ENCODE measurements at regions of chr21 and their contacts with region 1.

Region 1: GRCh38 chr21:41612674-41613532 is 104.9 kb upstream of the TMPRSS2 start:
- DNase-seq: peak; percentile 93
- ATAC-seq: peak; percentile 70
- H3K4me3 ChIP-seq: peak overlapping the region; percentile 34; the same call in 1 of the 2 replicates
- H3K27ac ChIP-seq: peak overlapping the region; percentile 86
- H3K4me1 ChIP-seq: peaks cover 52% of the 10 kb centered on the region
- H3K27me3 ChIP-seq: no peaks in the 10 kb centered on the region
- CTCF ChIP-seq: peak; percentile 67

Region 2: DNA sequence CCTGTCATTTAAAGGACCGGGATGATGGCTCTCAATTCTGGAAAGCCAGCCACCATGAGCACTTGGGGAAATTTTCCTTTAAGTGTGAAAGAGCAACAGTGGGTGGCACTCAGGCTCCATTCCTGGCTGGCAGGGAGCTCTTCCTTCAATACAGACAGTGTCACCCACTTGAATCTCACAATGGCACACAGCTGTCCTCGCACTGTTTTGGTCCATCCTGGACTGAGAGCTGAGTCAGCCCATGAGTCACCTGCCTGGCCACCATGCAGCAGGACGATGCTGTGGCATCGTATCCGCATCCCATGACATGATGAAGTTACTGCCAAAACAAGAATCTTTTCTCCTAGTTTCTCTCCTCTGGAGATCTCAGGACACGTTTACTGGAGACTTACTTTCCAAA is 111.0 kb before region 1 on chr21:
- CTCF ChIA-PET with region 1: interaction called, 5 read pairs
- POLR2A ChIA-PET with region 1: no interaction called
- intact Hi-C with region 1: loop called (anchors 5 kb)
- DNase-seq: peak; percentile 80
- ATAC-seq: peak; percentile 87
- H3K4me3 ChIP-seq: no peak overlapping the region
- H3K27ac ChIP-seq: peak overlapping the region; percentile 47
- H3K4me1 ChIP-seq: peaks cover 40% of the 10 kb centered on the region
- H3K27me3 ChIP-seq: no peaks in the 10 kb centered on the region
- CTCF ChIP-seq: peak; percentile 31; the same call in 1 of the 2 replicates

Region 3: GRCh38 chr21:41673581-41674335 is 60.9 kb after region 1 on chr21:
- CTCF ChIA-PET with region 1: interaction called, 12 read pairs
- POLR2A ChIA-PET with region 1: interaction called, 5 read pairs
- intact Hi-C with region 1: loop called (anchors 2 kb)
- DNase-seq: no peak
- ATAC-seq: no peak
- H3K4me3 ChIP-seq: no peak overlapping the region
- H3K27ac ChIP-seq: no peak overlapping the region
- H3K4me1 ChIP-seq: peaks cover 22% of the 10 kb centered on the region
- H3K27me3 ChIP-seq: no peaks in the 10 kb centered on the region
- CTCF ChIP-seq: no peak

Region 4: GRCh38 chr21:41761211-41762181 is 148.6 kb after region 1 on chr21:
- CTCF ChIA-PET with region 1: interaction called, 19 read pairs
- POLR2A ChIA-PET with region 1: interaction called, 7 read pairs
- intact Hi-C with region 1: loop called (anchors 1 kb)
- DNase-seq: peak; percentile 98
- ATAC-seq: peak; percentile 65
- H3K4me3 ChIP-seq: peak overlapping the region; percentile 94
- H3K27ac ChIP-seq: peak overlapping the region; percentile 97
- H3K4me1 ChIP-seq: peaks cover 66% of the 10 kb centered on the region
- H3K27me3 ChIP-seq: no peaks in the 10 kb centered on the region
- CTCF ChIP-seq: no peak

Region 5: GRCh38 chr21:41783441-41784161 is 170.7 kb after region 1 on chr21:
- CTCF ChIA-PET with region 1: interaction called, 47 read pairs
- POLR2A ChIA-PET with region 1: interaction called, 4 read pairs
- intact Hi-C with region 1: loop called (anchors 1 kb)
- DNase-seq: peak; percentile 100
- ATAC-seq: peak; percentile 66
- H3K4me3 ChIP-seq: peak overlapping the region; percentile 8; the same call in 1 of the 2 replicates
- H3K27ac ChIP-seq: peak overlapping the region; percentile 97
- H3K4me1 ChIP-seq: peaks cover 89% of the 10 kb centered on the region
- H3K27me3 ChIP-seq: no peaks in the 10 kb centered on the region
- CTCF ChIP-seq: no peak

Region 6: DNA sequence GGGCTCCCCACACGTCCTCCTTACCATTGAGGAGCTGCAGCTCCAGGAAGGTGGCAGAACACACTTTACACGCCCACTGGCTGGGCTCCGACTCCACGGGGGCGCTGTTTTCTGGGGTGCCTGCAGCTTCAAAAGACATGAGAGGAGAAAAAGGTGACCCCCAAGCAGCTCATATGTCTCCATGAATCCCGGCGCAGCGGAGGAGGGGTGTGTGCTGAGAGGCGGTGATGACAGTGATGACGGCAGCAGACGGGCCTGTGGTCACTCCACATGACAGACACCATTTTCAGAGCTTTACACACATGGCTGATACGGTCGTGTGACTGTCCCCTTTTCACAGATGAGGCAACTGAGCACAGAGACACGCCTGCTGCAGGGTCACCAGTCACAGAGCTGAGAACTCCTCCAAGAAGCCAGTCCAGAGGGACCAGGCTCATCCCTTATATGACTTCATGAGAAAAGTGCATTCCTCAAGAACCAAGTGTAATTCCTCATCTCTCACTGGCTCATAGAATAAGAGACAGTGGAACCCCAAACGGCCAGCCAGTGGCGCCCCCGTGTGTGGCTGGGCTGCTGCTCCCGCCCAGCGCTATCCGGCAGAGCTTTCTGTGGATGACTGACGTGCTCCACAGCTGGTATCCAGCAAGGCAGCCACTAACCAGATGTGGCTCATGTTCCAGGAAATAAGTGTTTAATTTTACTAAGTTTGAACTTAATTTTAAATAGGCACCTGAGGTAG is 234.3 kb after region 1 on chr21:
- CTCF ChIA-PET with region 1: no interaction called
- POLR2A ChIA-PET with region 1: no interaction called
- intact Hi-C with region 1: no loop called
- DNase-seq: no peak
- ATAC-seq: no peak
- H3K4me3 ChIP-seq: no peak overlapping the region
- H3K27ac ChIP-seq: no peak overlapping the region
- H3K4me1 ChIP-seq: no peaks in the 10 kb centered on the region
- H3K27me3 ChIP-seq: no peaks in the 10 kb centered on the region
- CTCF ChIP-seq: 0 out of 2 replicates have a peak, but pooled peaks have one; percentile 10

Region 7: DNA sequence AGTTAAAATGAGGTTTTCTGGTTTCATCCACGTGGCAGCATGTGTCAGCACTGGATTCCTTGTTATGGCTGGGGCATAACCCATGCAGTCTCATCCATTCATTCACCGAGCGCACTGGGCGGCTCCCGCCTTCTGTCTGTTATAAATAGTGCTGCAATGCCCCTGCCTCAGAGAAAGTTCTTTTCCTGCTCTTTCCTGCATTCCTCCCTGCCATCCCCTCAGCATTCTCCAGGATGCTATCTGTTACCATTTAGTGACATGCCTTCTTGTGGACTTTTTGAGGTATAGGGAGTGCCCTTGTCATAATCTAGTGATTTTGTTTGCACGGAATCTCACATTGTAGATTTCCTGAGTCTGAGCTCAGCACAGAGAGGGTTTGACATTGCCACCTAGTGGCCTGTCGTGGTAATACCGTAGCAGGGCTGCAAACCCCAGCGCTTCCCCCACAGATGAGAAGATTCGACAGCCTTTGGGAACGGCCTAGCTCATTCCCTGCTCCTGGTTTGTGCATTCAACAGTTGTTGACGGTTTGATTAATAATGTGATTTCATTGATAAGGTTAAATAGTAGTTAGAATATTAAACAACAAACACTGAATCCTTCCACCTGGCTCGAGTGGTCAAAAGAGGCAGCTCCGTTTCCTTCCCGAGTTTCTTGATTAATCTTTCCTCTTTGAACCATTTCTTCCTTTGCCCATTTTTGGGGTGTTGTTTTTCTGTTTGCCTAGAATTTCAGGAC is 504.5 kb after region 1 on chr21:
- CTCF ChIA-PET with region 1: no interaction called
- POLR2A ChIA-PET with region 1: no interaction called
- intact Hi-C with region 1: loop called (anchors 5 kb)
- DNase-seq: peak; percentile 94
- ATAC-seq: peak; percentile 65
- H3K4me3 ChIP-seq: peak overlapping the region; percentile 14; the same call in 1 of the 2 replicates
- H3K27ac ChIP-seq: peak overlapping the region; percentile 60
- H3K4me1 ChIP-seq: peaks cover 59% of the 10 kb centered on the region
- H3K27me3 ChIP-seq: no peaks in the 10 kb centered on the region
- CTCF ChIP-seq: peak; percentile 97

Measured in PC-3 (cell line).